ENCODE measurements at regions of chr17 and their contacts with region 1.

Region 1: DNA sequence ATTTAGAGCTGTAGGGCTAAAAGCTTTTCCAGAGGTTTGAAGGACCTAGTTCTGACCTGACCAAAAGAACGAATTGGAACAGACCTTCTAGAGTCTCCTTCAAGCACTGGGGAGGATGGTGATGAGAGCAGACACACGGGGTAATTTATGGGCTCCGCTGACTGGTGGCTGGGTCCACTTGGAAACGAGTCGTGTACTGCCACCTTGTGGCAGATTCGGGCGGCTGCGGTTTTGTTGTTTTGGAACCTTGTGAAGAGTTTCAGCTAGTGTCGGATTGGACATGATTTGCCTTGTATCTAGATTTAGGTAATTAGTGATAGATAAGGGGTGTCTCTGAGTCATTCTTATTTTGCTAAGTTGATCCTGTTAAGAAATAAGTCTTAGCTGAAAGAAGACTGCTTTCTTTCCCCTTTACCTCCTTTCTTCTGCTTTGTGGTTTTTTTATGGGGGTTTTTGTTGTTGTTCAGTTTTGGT is 98.9 kb downstream of the AATF start:
- DNase-seq: peak; percentile 78
- H3K4me3 ChIP-seq: no peak overlapping the region
- H3K27ac ChIP-seq: no peak overlapping the region
- H3K4me1 ChIP-seq: peaks cover 3% of the 10 kb centered on the region
- H3K27me3 ChIP-seq: no peaks in the 10 kb centered on the region
- CTCF ChIP-seq: peak; percentile 89
- POLR2A ChIP-seq: no peak

Region 2: DNA sequence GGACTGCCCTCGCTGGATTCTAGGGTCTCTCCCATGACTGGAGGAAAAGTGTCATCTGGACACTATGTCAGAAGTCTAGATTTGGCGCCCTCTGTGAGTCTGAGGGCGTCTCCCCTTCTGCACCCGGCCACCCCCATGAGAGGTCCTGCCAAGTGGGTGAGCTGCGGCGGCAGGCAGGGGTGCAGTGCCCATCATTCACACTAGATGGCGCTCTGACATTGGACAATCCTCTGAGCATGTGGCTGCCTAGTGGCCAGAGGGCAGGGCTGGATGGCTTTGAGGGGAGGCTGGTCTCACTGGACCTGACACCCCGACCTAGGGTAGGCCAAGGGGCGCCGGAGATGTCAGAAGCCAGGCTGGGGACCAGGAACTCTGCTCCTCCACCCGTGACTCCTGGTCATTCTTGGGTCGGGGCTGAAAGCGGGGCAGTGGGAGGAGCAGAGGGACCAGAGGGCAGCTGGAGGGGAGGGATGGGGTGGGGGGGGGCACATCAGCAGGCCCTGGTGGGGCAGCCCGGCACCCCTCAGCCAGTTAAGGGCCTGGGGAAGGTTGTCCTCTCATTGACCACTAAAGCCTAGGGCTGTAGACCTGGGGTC is 418.3 kb before region 1 on chr17:
- CTCF ChIA-PET with region 1: interaction called, 201 read pairs
- POLR2A ChIA-PET with region 1: no interaction called
- dilution Hi-C with region 1: no loop called
- intact Hi-C with region 1: loop called (anchors 1 kb)
- DNase-seq: peak; percentile 69
- H3K4me3 ChIP-seq: no peak overlapping the region
- H3K27ac ChIP-seq: no peak overlapping the region
- H3K4me1 ChIP-seq: no peaks in the 10 kb centered on the region
- H3K27me3 ChIP-seq: peaks cover 20 to 24% of the 10 kb centered on the region in 2 experiments
- CTCF ChIP-seq: peak; percentile 92 to 97
- POLR2A ChIP-seq: no peak

Region 3: GRCh38 chr17:36705874-36706731 is 341.6 kb before region 1 on chr17:
- CTCF ChIA-PET with region 1: interaction called, 17 read pairs
- POLR2A ChIA-PET with region 1: no interaction called
- dilution Hi-C with region 1: no loop called
- intact Hi-C with region 1: loop called (anchors 2 kb)
- DNase-seq: peak; percentile 10
- H3K4me3 ChIP-seq: no peak overlapping the region
- H3K27ac ChIP-seq: no peak overlapping the region
- H3K4me1 ChIP-seq: no peaks in the 10 kb centered on the region
- H3K27me3 ChIP-seq: peaks cover 2 to 11% of the 10 kb centered on the region in 2 experiments
- CTCF ChIP-seq: peak; percentile 59 to 68
- POLR2A ChIP-seq: no peak

Region 4: DNA sequence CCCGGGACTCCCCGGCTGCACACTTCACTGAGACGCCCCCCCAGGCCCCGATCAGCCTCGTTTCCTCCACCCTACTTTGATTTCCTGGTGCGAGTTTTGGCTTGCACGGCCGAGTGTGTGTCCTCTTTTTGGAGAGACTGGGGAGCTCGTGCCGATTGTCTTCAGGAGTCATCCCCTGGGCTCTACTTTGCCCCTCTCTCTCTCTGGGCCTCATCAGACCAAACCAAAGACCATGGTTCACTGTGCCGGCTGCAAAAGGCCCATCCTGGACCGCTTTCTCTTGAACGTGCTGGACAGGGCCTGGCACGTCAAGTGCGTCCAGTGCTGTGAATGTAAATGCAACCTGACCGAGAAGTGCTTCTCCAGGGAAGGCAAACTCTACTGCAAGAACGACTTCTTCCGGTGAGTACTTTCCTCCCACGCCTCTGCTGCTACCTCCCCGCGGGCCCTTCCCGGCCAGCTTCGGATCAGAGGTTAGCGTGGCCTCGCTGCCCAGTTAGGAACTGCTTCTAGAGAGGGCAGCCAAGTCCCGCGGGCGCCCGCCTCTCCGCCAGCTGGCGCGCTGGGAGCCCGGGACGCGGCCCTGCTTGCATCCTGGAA is 109.6 kb before region 1 on chr17:
- CTCF ChIA-PET with region 1: interaction called, 8 read pairs
- POLR2A ChIA-PET with region 1: no interaction called
- dilution Hi-C with region 1: no loop called
- intact Hi-C with region 1: loop called (anchors 5 kb)
- DNase-seq: peak; percentile 33
- H3K4me3 ChIP-seq: no peak overlapping the region
- H3K27ac ChIP-seq: no peak overlapping the region
- H3K4me1 ChIP-seq: peaks cover 12% of the 10 kb centered on the region
- H3K27me3 ChIP-seq: peaks cover 94 to 100% of the 10 kb centered on the region in 2 experiments
- CTCF ChIP-seq: no peak
- POLR2A ChIP-seq: no peak

Region 5: GRCh38 chr17:37059493-37059892 is 11.8 kb after region 1 on chr17:
- CTCF ChIA-PET with region 1: interaction called, 14 read pairs
- POLR2A ChIA-PET with region 1: no interaction called
- dilution Hi-C with region 1: no loop called
- intact Hi-C with region 1: no loop called
- DNase-seq: no peak
- H3K4me3 ChIP-seq: no peak overlapping the region
- H3K27ac ChIP-seq: no peak overlapping the region
- H3K4me1 ChIP-seq: no peaks in the 10 kb centered on the region
- H3K27me3 ChIP-seq: peaks cover 0 to 2% of the 10 kb centered on the region in 2 experiments
- CTCF ChIP-seq: no peak
- POLR2A ChIP-seq: no peak

Region 6: DNA sequence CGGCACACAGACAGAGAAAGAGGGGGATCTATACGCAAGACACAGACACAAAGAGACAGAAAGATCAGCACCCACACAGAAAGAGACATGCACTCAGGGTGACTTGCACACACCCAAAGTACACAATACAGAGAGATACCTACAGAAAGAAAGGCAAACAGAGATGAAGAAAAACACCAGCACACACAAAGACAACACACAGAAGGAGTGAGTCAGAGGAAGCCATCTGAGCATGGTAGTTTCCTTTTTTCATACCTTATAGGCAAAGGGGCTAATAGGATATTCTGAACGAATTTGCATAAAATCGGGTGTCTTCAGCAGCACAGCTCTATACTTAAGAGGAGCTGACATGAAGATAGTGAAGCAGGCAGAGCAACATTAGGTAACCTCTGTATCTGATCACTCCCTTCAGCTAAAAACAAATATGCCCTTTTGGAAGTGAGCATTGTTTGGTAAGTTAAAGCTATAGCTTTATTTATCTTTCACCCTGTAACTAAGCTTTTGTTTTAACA is 99.7 kb after region 1 on chr17:
- CTCF ChIA-PET with region 1: no interaction called
- POLR2A ChIA-PET with region 1: no interaction called
- dilution Hi-C with region 1: no loop called
- intact Hi-C with region 1: no loop called
- DNase-seq: peak; percentile 81
- H3K4me3 ChIP-seq: no peak overlapping the region
- H3K27ac ChIP-seq: peak overlapping the region; percentile 55
- H3K4me1 ChIP-seq: peaks cover 16% of the 10 kb centered on the region
- H3K27me3 ChIP-seq: no peaks in the 10 kb centered on the region
- CTCF ChIP-seq: no peak
- POLR2A ChIP-seq: no peak

Region 7: GRCh38 chr17:37239690-37240334 is 192.1 kb after region 1 on chr17:
- CTCF ChIA-PET with region 1: interaction called, 31 read pairs
- POLR2A ChIA-PET with region 1: no interaction called
- dilution Hi-C with region 1: no loop called
- intact Hi-C with region 1: no loop called
- DNase-seq: peak; percentile 62
- H3K4me3 ChIP-seq: no peak overlapping the region
- H3K27ac ChIP-seq: no peak overlapping the region
- H3K4me1 ChIP-seq: no peaks in the 10 kb centered on the region
- H3K27me3 ChIP-seq: no peaks in the 10 kb centered on the region
- CTCF ChIP-seq: peak; percentile 46 to 52
- POLR2A ChIP-seq: no peak